ENCODE measurements at regions of chr9 and their contacts with region 1.

Region 1: GRCh38 chr9:12403721-12404120 is 289.5 kb upstream of the TYRP1 start:
- DNase-seq: no peak
- H3K4me3 ChIP-seq: no peak overlapping the region
- H3K27ac ChIP-seq: no peak overlapping the region
- H3K4me1 ChIP-seq: no peaks in the 10 kb centered on the region
- H3K27me3 ChIP-seq: no peaks in the 10 kb centered on the region
- CTCF ChIP-seq: no peak

Region 2: DNA sequence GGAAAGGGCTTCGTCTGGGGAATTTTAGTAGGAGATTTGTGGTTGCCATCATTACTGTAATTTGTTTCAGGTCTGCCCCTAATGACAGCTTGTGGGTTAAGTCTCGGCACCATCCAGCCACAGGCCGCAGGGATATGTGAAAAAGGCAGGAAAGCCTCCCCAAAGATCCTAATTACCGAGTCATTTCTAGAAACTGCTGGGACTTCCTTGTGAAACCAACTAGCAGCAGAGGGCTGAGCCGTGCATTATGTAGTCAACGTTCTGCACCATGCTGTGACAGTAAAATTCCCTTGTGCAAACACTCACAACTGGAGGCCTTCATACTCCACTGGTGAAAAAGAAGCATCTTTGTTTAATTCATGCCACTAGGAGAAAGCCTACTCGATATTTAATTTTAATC is 645.5 kb after region 1 on chr9:
- CTCF ChIA-PET with region 1: no interaction called
- POLR2A ChIA-PET with region 1: no interaction called
- intact Hi-C with region 1: no loop called
- DNase-seq: no peak
- H3K4me3 ChIP-seq: no peak overlapping the region
- H3K27ac ChIP-seq: no peak overlapping the region
- H3K4me1 ChIP-seq: no peaks in the 10 kb centered on the region
- H3K27me3 ChIP-seq: no peaks in the 10 kb centered on the region
- CTCF ChIP-seq: no peak

Region 3: DNA sequence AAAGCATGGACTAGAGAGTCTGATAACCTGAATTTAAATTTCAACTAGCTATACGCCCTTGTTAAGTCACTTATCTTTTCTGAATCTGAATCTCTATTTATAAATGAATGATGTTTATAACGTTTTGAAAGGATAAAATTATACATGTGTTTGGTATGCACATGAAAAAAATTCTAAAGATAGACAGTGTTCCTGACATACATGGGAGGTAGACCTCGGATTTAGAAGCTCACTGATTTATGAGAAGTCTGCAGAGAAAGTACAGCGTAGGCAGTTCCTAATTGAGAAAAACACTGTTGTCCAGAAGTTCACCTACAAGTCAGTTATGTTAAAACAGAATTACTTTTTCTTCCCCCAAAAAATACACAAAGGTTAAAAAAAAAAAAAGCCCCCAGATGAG is 849.1 kb after region 1 on chr9:
- CTCF ChIA-PET with region 1: interaction called, 15 read pairs
- POLR2A ChIA-PET with region 1: no interaction called
- intact Hi-C with region 1: no loop called
- DNase-seq: no peak
- H3K4me3 ChIP-seq: no peak overlapping the region
- H3K27ac ChIP-seq: no peak overlapping the region
- H3K4me1 ChIP-seq: no peaks in the 10 kb centered on the region
- H3K27me3 ChIP-seq: no peaks in the 10 kb centered on the region
- CTCF ChIP-seq: no peak